ENCODE measurements at regions of chr14 and their contacts with region 1.

Region 1: GRCh38 chr14:22653012-22653621 is 9.0 kb upstream of the OR6J1 start:
- DNase-seq: peak; percentile 18 to 55
- ATAC-seq: peak in 7 of 8 donors; percentile 66 to 88 (median 77)
- H3K4me3 ChIP-seq: no peak overlapping the region
- H3K27ac ChIP-seq: no peak overlapping the region
- H3K4me1 ChIP-seq: peaks cover 0 to 9% (median 0%) of the 10 kb centered on the region in 9 donors
- H3K27me3 ChIP-seq: peaks cover 0 to 6% (median 0%) of the 10 kb centered on the region in 7 donors
- CTCF ChIP-seq: peak; percentile 55 to 88 (median 79)

Region 2: GRCh38 chr14:22570132-22570949 is 82.8 kb before region 1 on chr14:
- intact Hi-C with region 1: loop called in 8 of 10 experiments (anchors 2 to 5 kb)
- DNase-seq: peak in 1 of 2 donors; percentile 85
- ATAC-seq: peak; percentile 57 to 86 (median 78)
- H3K4me3 ChIP-seq: peak overlapping the region in 1 of 10 donors; percentile 12
- H3K27ac ChIP-seq: peak overlapping the region in 4 of 10 donors; percentile 30 to 91 (median 50)
- H3K4me1 ChIP-seq: peaks cover 0 to 66% (median 12%) of the 10 kb centered on the region in 9 donors
- H3K27me3 ChIP-seq: no peaks in the 10 kb centered on the region
- CTCF ChIP-seq: peak; percentile 80 to 88 (median 83)